K562 (cell line): ENCODE measurements at regions of chr21 and their contacts with region 1.

Region 1: GRCh38 chr21:33199516-33200217 is 30.1 kb upstream of the IFNAR2 start:
- DNase-seq: peak; percentile 77 to 92 (median 78)
- ATAC-seq: peak; percentile 91
- H3K4me3 ChIP-seq: no peak overlapping the region
- H3K27ac ChIP-seq: no peak overlapping the region
- H3K4me1 ChIP-seq: peaks cover 2 to 12% of the 10 kb centered on the region in 2 experiments; a peak in 4 of 5 replicates
- H3K27me3 ChIP-seq: peaks cover 6 to 14% of the 10 kb centered on the region in 2 experiments
- CTCF ChIP-seq: peak; percentile 86 to 96 (median 91)
- EP300 ChIP-seq: 0 out of 2 replicates have a peak, but pooled peaks have one; percentile 35
- POLR2A ChIP-seq: no peak
- RAD21 ChIP-seq: peak; percentile 99 to 100

Region 2: GRCh38 chr21:32653311-32653901 is 546.3 kb before region 1 on chr21:
- CTCF ChIA-PET with region 1: interaction called, 4 read pairs
- POLR2A ChIA-PET with region 1: no interaction called
- in situ Hi-C with region 1: loop called (anchors 25 kb)
- intact Hi-C with region 1: loop called (anchors 5 kb)
- DNase-seq: peak; percentile 54 to 67 (median 62)
- ATAC-seq: peak; percentile 98
- H3K4me3 ChIP-seq: no peak overlapping the region
- H3K27ac ChIP-seq: no peak overlapping the region
- H3K4me1 ChIP-seq: no peaks in the 10 kb centered on the region
- H3K27me3 ChIP-seq: no peaks in the 10 kb centered on the region
- CTCF ChIP-seq: peak; percentile 77 to 88 (median 86)
- EP300 ChIP-seq: no peak
- POLR2A ChIP-seq: no peak
- RAD21 ChIP-seq: peak; percentile 70 to 84

Region 3: DNA sequence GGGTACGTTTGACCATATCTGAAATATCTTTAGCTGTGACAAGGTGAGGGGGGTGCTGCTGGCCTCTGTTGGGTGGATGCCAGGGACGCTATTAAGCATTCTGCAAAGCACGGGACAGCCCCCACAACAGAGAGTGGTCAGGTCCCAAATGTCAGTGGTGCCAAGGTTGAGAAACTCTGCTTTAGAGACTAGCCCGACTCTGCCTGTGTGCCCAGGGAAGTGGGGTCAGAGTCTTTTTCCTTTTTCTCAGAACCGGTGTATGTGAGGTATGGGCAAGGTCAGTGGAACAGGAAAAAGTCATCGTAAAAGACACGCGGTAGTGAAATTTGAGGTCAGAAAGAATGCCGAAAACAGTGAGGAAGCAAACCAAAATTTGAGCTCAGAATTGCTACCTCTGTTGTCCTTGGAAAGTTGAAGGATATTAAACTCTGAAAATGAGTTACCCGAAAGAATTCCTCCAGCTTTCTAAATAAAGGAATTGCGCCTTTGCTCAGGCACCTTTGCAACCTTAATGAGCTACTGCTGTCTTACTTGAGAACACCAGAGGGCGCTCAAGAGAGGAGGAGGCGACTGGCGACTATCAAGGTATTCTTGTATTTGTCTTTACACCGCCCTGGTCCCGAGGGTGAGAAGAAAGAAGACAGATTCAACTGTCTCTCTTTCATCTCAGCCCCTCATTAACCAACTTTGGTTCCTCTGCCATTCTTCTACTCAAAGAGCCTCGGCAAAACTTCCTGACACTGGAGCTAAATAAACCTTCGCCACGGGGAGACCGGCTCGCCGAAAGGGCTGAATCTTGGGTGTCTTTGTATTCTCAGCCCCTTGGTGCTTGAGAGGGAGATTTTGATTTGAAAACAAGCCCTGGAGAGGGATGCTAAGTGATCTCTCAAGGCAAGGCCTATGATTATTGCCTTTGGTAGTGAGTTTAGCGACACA is 259.3 kb before region 1 on chr21:
- CTCF ChIA-PET with region 1: interaction called, 12 read pairs
- POLR2A ChIA-PET with region 1: no interaction called
- in situ Hi-C with region 1: loop called (anchors 5 kb)
- intact Hi-C with region 1: loop called (anchors 1 kb)
- DNase-seq: peak; percentile 62 to 75 (median 74)
- ATAC-seq: peak; percentile 92
- H3K4me3 ChIP-seq: no peak overlapping the region
- H3K27ac ChIP-seq: no peak overlapping the region
- H3K4me1 ChIP-seq: no peaks in the 10 kb centered on the region
- H3K27me3 ChIP-seq: peaks cover 18 to 27% of the 10 kb centered on the region in 2 experiments; a peak in 4 of 5 replicates
- CTCF ChIP-seq: peak; percentile 82 to 85 (median 84)
- EP300 ChIP-seq: no peak
- POLR2A ChIP-seq: no peak
- RAD21 ChIP-seq: peak; percentile 36 to 81; a peak in 3 of 4 replicates

Region 4: GRCh38 chr21:32958288-32959002 is 241.2 kb before region 1 on chr21:
- CTCF ChIA-PET with region 1: no interaction called
- POLR2A ChIA-PET with region 1: no interaction called
- in situ Hi-C with region 1: no loop called
- intact Hi-C with region 1: no loop called
- DNase-seq: no peak
- ATAC-seq: no peak
- H3K4me3 ChIP-seq: no peak overlapping the region
- H3K27ac ChIP-seq: no peak overlapping the region
- H3K4me1 ChIP-seq: no peaks in the 10 kb centered on the region
- H3K27me3 ChIP-seq: peaks cover 28 to 40% of the 10 kb centered on the region in 2 experiments
- CTCF ChIP-seq: no peak
- EP300 ChIP-seq: no peak
- POLR2A ChIP-seq: no peak
- RAD21 ChIP-seq: no peak

Region 5: DNA sequence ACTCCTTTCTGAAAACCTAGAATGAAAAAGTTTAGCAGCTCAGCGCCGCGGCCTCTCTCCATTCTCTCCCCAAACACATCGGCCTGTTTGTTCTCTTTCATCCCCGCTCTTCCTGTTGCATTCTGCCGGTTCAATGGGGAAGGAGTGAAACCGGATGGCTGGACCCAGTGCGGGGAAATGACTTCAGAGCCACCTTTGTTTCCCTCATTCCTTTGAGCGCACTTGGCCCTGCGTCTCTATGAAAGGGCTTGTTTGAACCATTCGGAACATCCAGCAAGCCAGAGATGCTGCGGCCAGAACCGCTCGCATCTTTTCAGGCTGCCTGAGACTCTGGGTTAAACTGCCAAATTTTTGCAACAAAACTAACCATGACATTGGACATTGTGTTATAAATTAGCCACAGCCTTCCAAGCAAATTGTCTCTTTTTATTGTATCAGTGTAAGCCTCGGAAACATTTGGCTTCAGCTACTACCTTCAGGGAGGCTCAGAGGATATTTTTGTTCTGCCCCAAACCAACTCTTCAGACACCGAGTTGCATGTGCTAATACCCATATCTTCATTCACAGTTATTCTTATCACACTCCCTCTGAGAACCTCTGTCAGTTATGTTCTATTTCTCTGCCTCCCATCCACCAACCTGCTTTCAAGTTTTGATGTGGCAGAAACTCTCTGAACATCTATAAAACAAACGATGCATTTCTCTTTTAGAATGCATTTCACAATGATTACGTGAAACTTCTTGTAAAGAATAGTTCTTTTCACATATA is 134.9 kb before region 1 on chr21:
- CTCF ChIA-PET with region 1: no interaction called
- POLR2A ChIA-PET with region 1: no interaction called
- in situ Hi-C with region 1: no loop called
- intact Hi-C with region 1: no loop called
- DNase-seq: no peak
- ATAC-seq: no peak; the same call in 1 of the 3 replicates
- H3K4me3 ChIP-seq: no peak overlapping the region
- H3K27ac ChIP-seq: no peak overlapping the region
- H3K4me1 ChIP-seq: peaks cover 0 to 6% of the 10 kb centered on the region in 2 experiments; a peak in 2 of 5 replicates
- H3K27me3 ChIP-seq: peaks cover 34 to 49% of the 10 kb centered on the region in 2 experiments; a peak in 4 of 5 replicates
- CTCF ChIP-seq: no peak
- EP300 ChIP-seq: no peak
- POLR2A ChIP-seq: no peak
- RAD21 ChIP-seq: no peak

Region 6: GRCh38 chr21:33127154-33127893 is 72.3 kb before region 1 on chr21:
- CTCF ChIA-PET with region 1: interaction called, 5 read pairs
- POLR2A ChIA-PET with region 1: no interaction called
- in situ Hi-C with region 1: no loop called
- intact Hi-C with region 1: loop called (anchors 2 kb)
- DNase-seq: peak; percentile 62 to 80 (median 74)
- ATAC-seq: peak; percentile 95
- H3K4me3 ChIP-seq: no peak overlapping the region
- H3K27ac ChIP-seq: no peak overlapping the region
- H3K4me1 ChIP-seq: no peaks in the 10 kb centered on the region
- H3K27me3 ChIP-seq: peaks cover 25 to 45% of the 10 kb centered on the region in 2 experiments; a peak in 4 of 5 replicates
- CTCF ChIP-seq: peak; percentile 92 to 96 (median 96)
- EP300 ChIP-seq: no peak
- POLR2A ChIP-seq: no peak
- RAD21 ChIP-seq: peak; percentile 86 to 92

Region 7: DNA sequence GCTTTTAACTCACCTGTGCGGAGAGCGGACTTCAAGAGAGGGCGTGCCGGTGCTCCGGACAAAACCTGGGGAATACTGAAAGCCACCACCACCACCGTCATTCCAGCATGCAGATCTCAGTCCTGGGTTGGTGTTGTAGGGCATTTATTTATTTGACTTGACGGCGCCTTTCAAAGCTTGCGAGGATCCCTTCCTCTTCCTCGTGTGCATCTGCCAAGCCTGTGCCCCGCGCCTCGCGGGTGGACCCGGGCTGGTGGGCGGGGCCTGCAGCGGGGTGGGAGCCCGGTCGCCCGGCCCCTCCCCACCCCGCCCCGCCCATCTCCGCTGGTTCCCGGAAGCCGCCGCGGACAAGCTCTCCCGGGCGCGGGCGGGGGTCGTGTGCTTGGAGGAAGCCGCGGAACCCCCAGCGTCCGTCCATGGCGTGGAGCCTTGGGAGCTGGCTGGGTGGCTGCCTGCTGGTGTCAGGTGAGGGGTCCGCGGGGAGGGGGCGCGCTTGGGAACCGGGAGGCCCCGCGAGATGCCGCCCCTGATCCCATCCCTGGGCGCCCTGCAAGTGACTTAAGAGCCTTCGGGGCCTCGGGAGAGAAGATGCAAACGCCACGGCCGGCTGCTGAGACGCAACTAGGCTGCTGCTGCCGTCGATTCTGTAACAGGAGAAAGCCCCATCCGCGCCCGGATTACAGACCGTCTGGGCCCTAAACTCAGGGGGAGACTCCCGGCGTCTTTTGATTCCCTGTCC is 66.6 kb after region 1 on chr21 and contains the start of gene IL10RB:
- CTCF ChIA-PET with region 1: no interaction called
- POLR2A ChIA-PET with region 1: no interaction called
- in situ Hi-C with region 1: no loop called
- intact Hi-C with region 1: loop called (anchors 5 kb)
- DNase-seq: peak; percentile 90 to 100 (median 98)
- ATAC-seq: peak; percentile 97
- H3K4me3 ChIP-seq: peak within 1 kb of the TSS; percentile 93
- H3K27ac ChIP-seq: peak within 1 kb of the TSS; percentile 71
- H3K4me1 ChIP-seq: peaks cover 5 to 17% of the 10 kb centered on the region in 2 experiments; a peak in 4 of 5 replicates
- H3K27me3 ChIP-seq: no peaks in the 10 kb centered on the region
- CTCF ChIP-seq: no peak
- EP300 ChIP-seq: no peak
- POLR2A ChIP-seq: peak; percentile 75
- RAD21 ChIP-seq: no peak
- polyA plus RNA-seq, gene IL10RB: 10.9 to 14.7 TPM

Region 8: GRCh38 chr21:33360881-33361602 is 161.4 kb after region 1 on chr21:
- CTCF ChIA-PET with region 1: interaction called, 11 read pairs
- POLR2A ChIA-PET with region 1: interaction called, 4 read pairs
- in situ Hi-C with region 1: no loop called
- intact Hi-C with region 1: no loop called
- DNase-seq: peak; percentile 87 to 90 (median 88)
- ATAC-seq: peak; percentile 97
- H3K4me3 ChIP-seq: peak overlapping the region; percentile 23
- H3K27ac ChIP-seq: no peak overlapping the region
- H3K4me1 ChIP-seq: peaks cover 9 to 20% of the 10 kb centered on the region in 2 experiments; a peak in 3 of 5 replicates
- H3K27me3 ChIP-seq: no peaks in the 10 kb centered on the region
- CTCF ChIP-seq: peak; percentile 90 to 97 (median 92)
- EP300 ChIP-seq: no peak
- POLR2A ChIP-seq: no peak
- RAD21 ChIP-seq: peak; percentile 48 to 75

Region 9: GRCh38 chr21:33441489-33442477 is 242.1 kb after region 1 on chr21:
- CTCF ChIA-PET with region 1: interaction called, 54 read pairs
- POLR2A ChIA-PET with region 1: interaction called, 3 read pairs
- in situ Hi-C with region 1: loop called (anchors 5 kb)
- intact Hi-C with region 1: loop called (anchors 1 kb)
- DNase-seq: peak in 1 of 4 experiments; percentile 37
- ATAC-seq: peak; percentile 54
- H3K4me3 ChIP-seq: no peak overlapping the region
- H3K27ac ChIP-seq: no peak overlapping the region
- H3K4me1 ChIP-seq: no peaks in the 10 kb centered on the region; a peak in 1 of 5 replicates
- H3K27me3 ChIP-seq: no peaks in the 10 kb centered on the region
- CTCF ChIP-seq: no peak
- EP300 ChIP-seq: no peak
- POLR2A ChIP-seq: 0 out of 2 replicates have a peak, but pooled peaks have one; percentile 18
- RAD21 ChIP-seq: no peak